ENCODE measurements at regions of chr7 and their contacts with region 1.

Region 1: DNA sequence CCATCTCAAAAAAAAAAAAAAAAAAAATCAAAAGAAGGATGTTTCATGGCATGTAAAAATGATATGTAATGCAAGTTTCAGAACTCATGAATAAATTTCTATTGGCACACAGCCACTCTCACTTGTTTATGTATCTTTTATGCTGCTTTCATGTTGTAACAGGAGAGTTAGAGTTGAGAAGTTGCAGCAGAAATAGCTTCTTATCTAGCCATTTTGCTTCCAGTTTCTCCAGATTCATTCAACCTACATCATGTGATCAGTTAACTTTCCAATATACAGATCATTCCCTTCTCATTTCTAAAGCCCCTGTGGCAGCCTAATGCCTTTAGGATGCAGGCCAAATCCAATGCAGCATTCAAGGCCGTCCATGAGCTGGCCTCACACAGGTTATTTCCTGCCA is 30.4 kb downstream of the ZNF786 start:
- DNase-seq: no peak
- ATAC-seq: no peak
- H3K4me3 ChIP-seq: no peak overlapping the region
- H3K27ac ChIP-seq: no peak overlapping the region
- H3K4me1 ChIP-seq: peaks cover 0 to 12% (median 0%) of the 10 kb centered on the region in 9 donors
- H3K27me3 ChIP-seq: no peaks in the 10 kb centered on the region
- CTCF ChIP-seq: no peak

Region 2: GRCh38 chr7:149005241-149006050 is 54.7 kb before region 1 on chr7:
- intact Hi-C with region 1: loop called in 9 of 10 experiments (anchors 1 to 10 kb)
- DNase-seq: peak; percentile 85
- ATAC-seq: peak; percentile 77 to 94 (median 82)
- H3K4me3 ChIP-seq: no peak overlapping the region
- H3K27ac ChIP-seq: no peak overlapping the region
- H3K4me1 ChIP-seq: peaks cover 0 to 4% (median 0%) of the 10 kb centered on the region in 9 donors
- H3K27me3 ChIP-seq: no peaks in the 10 kb centered on the region
- CTCF ChIP-seq: peak; percentile 82 to 95 (median 89)

Region 3: DNA sequence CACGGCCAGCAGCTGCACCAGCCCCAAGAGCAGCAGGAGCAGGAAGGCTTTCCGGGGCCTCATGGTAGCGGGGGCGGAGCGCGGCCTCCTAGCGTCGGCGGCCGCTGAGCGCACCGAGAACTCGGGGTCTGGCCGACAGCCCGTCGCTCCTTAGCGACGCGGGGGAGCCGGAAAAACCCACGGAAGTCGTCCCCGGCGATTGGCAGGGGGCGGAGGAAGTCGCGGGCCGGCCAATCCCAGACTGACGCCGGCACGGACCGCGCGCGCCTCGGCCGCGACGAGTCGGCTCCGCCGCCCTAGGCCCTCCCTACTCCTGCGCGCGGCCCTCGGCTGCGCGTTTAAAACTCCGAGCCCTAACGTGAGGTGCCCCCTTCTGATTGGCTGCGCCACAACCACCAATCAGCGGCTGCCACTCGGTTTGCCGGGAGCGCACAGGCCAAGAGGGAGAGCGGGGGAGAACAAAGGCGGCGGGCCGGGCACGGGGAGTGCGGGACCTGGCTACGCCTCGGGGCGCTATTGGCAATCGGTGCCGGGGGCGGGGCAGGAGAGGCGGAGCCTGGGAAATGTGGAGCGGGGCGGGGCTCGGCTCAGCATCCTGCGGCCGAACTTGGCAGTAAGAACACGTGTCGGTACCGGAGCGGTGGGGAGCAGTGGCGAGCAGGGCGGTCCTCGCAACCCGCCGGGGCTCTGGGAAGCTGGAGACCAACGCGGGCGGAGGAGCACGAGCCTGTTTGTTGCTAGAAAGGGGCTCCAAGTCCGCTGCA is 31.6 kb before region 1 on chr7 and contains the start of gene PDIA4:
- intact Hi-C with region 1: loop called in 7 of 10 experiments (anchors 1 to 5 kb)
- DNase-seq: peak; percentile 99 to 100
- ATAC-seq: peak; percentile 95 to 99 (median 98)
- H3K4me3 ChIP-seq: peak within 1 kb of the TSS; percentile 63 to 92 (median 84)
- H3K27ac ChIP-seq: peak within 1 kb of the TSS; percentile 44 to 95 (median 88)
- H3K4me1 ChIP-seq: peaks cover 0 to 35% (median 22%) of the 10 kb centered on the region in 9 donors
- H3K27me3 ChIP-seq: no peaks in the 10 kb centered on the region
- CTCF ChIP-seq: peak in 6 of 9 donors; percentile 8 to 49 (median 33)
- total RNA-seq, gene PDIA4: 18.2 to 49.2 (median 24.6) TPM

Region 4: DNA sequence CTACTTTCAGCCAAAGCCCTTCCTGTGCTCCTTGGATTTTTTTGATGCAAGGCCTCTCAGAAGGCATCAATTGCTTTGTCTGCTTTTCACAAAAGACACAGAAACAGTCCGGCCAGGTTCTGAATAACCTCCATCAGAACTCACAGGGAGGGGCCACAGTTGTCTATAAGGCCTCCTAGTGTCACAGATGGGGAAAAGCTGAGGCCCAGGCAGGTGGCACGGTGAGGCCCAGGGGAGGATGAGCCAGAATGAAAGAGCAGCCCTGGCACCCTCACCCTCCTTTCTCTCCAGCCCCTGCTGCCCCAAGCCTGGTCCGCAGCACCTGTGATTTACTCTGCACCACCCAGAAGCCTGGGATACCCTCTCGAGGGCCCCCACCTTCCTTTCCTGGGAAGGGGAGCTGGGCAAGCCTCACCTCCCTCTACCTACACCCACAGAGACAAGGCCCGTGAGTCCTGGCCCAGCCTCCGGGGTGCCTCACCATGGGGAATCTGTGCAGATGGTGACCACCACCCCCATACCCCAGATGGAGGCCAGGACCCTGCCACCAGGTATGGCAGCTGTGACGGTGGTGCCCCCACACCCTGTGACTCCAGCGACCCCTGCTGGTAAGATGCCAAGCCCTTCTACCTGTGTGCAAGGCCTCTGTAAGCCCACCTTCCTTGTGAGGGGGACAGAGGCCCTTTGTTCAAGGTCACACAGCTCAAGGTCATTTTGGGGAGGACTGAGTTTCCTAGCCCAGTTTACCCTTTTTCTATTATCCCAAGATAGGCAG is 739.4 kb after region 1 on chr7:
- intact Hi-C with region 1: no loop called
- DNase-seq: no peak
- ATAC-seq: peak in 1 of 8 donors; percentile 12
- H3K4me3 ChIP-seq: no peak overlapping the region
- H3K27ac ChIP-seq: no peak overlapping the region
- H3K4me1 ChIP-seq: no peaks in the 10 kb centered on the region
- H3K27me3 ChIP-seq: peaks cover 0 to 6% (median 0%) of the 10 kb centered on the region in 7 donors
- CTCF ChIP-seq: peak in 8 of 9 donors; percentile 11 to 57 (median 43)

Measured in heart right ventricle (tissue), 16 donors.